Left cardiac atrium (tissue), 4 donors: ENCODE measurements at regions of chrX and their contacts with region 1.

Region 1: GRCh38 chrX:76454456-76454927 is 27.0 kb downstream of the MAGEE1 start:
- DNase-seq: no peak
- ATAC-seq: no peak

Region 2: DNA sequence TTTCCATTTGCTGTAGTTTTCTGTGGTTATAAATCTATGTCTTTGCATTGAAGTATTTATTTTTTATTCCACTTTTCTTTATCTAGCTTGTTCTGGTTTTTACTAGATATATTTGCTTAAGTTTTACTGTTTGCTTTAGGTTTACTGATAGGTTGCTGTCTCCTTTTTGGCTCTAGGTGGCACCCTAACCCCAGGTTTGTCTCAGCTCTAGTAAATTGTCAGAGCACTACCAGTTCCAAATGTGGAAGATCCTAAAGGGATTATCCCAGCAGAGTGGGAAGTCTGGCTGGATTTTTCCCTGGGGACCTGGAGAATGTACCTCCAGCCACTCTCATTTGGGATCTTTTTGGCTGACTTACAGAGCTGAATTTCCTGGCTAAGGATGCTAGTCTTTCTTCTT is 175.5 kb before region 1 on chrX:
- intact Hi-C with region 1: loop called in 1 of 2 experiments (anchors 10 kb)
- DNase-seq: no peak
- ATAC-seq: peak in 1 of 2 donors; percentile 27